ENCODE measurements at regions of chr15 and their contacts with region 1.

Region 1: DNA sequence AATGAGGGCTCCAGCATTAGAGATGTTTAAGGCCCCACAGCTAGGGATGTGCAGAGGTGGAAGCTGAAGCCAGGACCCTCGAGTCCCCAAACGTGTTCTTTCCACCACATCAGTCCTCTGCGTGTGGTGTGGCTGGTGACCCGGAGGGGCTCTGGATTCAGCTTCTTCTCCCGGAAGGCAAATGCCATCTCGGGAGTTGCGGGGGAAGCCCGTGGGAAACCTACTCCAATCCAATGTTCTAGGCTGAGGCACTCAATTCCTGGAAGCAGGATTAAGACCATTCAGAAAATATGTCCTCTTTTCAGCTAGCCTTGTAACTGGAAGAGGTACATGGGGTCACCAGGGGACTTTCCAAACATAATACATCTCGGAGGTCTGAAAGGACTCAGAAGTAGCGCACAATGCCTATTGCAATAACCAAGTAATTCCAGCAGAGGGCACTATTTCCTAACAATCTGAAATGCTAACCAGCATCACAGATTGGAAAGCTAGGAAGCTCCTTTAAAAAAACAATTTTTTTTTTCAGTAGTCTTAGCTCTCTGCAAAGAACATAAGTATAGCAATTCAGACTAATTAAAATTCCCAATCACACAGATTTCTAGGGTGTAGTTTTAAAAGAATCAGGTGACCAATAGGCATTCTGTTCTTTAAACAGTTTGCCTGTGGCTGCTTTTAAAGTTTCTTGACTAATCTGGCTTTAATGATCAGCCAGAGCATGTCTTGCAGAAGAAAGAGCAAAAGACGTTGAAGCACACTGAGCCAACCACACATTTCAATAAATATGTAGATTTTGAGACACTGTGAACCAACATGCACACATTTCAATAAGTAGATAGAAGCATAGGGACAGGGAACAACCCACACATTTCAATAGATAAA is 36.1 kb downstream of the BNC1 start:
- DNase-seq: peak in 3 of 10 donors; percentile 4 to 34 (median 27)
- H3K4me3 ChIP-seq: peak overlapping the region in 36 of 59 donors; percentile 2 to 52 (median 31)
- H3K27ac ChIP-seq: no peak overlapping the region
- H3K27me3 ChIP-seq: peaks cover 0 to 15% (median 3%) of the 10 kb centered on the region in 45 donors
- CTCF ChIP-seq: peak; percentile 89 to 100 (median 98)

Region 2: GRCh38 chr15:83372420-83372891 is 124.1 kb after region 1 on chr15:
- intact Hi-C with region 1: loop called in 1 of 2 experiments (anchors 10 kb)
- DNase-seq: peak in 3 of 10 donors; percentile 16 to 47 (median 36)
- H3K4me3 ChIP-seq: no peak overlapping the region
- H3K27ac ChIP-seq: no peak overlapping the region
- H3K27me3 ChIP-seq: peaks cover 0 to 63% (median 32%) of the 10 kb centered on the region in 45 donors
- CTCF ChIP-seq: peak in 4 of 56 donors; percentile 5 to 18 (median 9)

Region 3: GRCh38 chr15:83380682-83381081 is 132.3 kb after region 1 on chr15:
- intact Hi-C with region 1: loop called (anchors 1 to 10 kb)
- DNase-seq: peak in 5 of 10 donors; percentile 42 to 73 (median 54)
- H3K4me3 ChIP-seq: no peak overlapping the region
- H3K27ac ChIP-seq: no peak overlapping the region
- H3K27me3 ChIP-seq: peaks cover 0 to 64% (median 42%) of the 10 kb centered on the region in 45 donors
- CTCF ChIP-seq: peak in 47 of 56 donors; percentile 12 to 71 (median 47)

Region 4: DNA sequence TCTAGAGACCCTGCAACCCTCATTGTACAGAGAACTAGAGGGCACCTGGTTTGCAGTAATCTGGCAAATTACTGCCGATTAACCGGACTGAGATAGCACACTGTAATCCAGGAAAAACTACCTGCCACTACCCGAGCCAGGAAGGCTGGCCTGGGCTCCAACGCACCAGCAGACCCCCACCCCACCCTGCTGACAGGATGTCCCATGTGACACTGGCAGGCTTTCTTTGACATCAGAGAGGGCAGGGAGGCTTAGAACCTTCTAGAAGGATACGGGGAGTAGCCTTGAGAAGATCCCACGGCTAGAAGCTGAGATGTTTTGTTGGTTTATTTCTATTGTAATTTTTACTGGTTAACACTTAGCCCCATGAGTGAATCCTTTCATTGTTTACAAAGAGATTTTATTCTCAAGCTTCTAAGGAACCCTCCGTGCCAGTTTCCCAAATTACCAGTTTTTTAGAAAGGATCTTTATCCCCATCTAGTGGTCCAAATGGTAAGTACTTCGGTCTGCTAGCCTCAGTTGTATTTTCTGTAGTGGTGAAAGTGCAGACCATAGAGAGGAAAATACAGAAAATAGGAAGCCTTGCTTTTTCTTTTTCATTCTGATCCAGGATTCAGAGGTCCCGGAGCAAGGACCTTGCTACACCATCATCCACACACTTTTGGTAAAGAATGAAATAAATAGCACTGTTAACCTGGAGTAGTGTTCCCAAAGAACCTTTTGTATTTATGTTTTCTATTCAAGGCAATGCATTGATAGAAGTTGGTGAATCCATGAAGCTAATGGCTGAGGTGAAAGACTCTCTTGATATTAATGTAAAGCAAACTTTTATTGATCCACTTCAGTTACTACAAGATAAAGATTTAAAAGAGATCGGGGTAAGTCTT is 323.7 kb after region 1 on chr15:
- intact Hi-C with region 1: loop called (anchors 10 kb)
- DNase-seq: no peak
- H3K4me3 ChIP-seq: peak overlapping the region in 8 of 59 donors; percentile 5 to 34 (median 12)
- H3K27ac ChIP-seq: peak overlapping the region; percentile 44 to 100 (median 96)
- H3K27me3 ChIP-seq: no peaks in the 10 kb centered on the region
- CTCF ChIP-seq: peak; percentile 57 to 92 (median 82)